GM12878 (cell line): ENCODE measurements at regions of chr19 and their contacts with region 1.

Region 1: GRCh38 chr19:42563352-42564210 is 31.1 kb downstream of the CEACAM8 start:
- DNase-seq: no peak
- ATAC-seq: peak; percentile 94
- H3K4me3 ChIP-seq: no peak overlapping the region
- H3K27ac ChIP-seq: no peak overlapping the region
- H3K4me1 ChIP-seq: no peaks in the 10 kb centered on the region
- H3K27me3 ChIP-seq: no peaks in the 10 kb centered on the region
- CTCF ChIP-seq: peak; percentile 67 to 78 (median 71)
- EP300 ChIP-seq: no peak
- POLR2A ChIP-seq: no peak
- RAD21 ChIP-seq: peak; percentile 58

Region 2: GRCh38 chr19:42497492-42498168 is 66.0 kb before region 1 on chr19:
- CTCF ChIA-PET with region 1: no interaction called
- POLR2A ChIA-PET with region 1: no interaction called
- RAD21 ChIA-PET with region 1: no interaction called
- SMC1A ChIA-PET with region 1: no interaction called
- in situ Hi-C with region 1: no loop called
- intact Hi-C with region 1: no loop called
- DNase-seq: peak; percentile 60
- ATAC-seq: peak; percentile 86
- H3K4me3 ChIP-seq: peak overlapping the region; percentile 9; the same call in 1 of the 2 replicates
- H3K27ac ChIP-seq: peak overlapping the region; percentile 80
- H3K4me1 ChIP-seq: peaks cover 28% of the 10 kb centered on the region
- H3K27me3 ChIP-seq: no peaks in the 10 kb centered on the region
- CTCF ChIP-seq: no peak
- EP300 ChIP-seq: peak; percentile 66 to 78; a peak in 3 of 4 replicates
- POLR2A ChIP-seq: no peak
- RAD21 ChIP-seq: 0 out of 2 replicates have a peak, but pooled peaks have one; percentile 8

Region 3: GRCh38 chr19:42596391-42597072 is 33.0 kb after region 1 on chr19:
- CTCF ChIA-PET with region 1: interaction called, 31 read pairs
- POLR2A ChIA-PET with region 1: no interaction called
- RAD21 ChIA-PET with region 1: no interaction called
- SMC1A ChIA-PET with region 1: interaction called, 4 read pairs
- in situ Hi-C with region 1: no loop called
- intact Hi-C with region 1: loop called (anchors 1 kb)
- DNase-seq: no peak
- ATAC-seq: peak; percentile 83
- H3K4me3 ChIP-seq: no peak overlapping the region
- H3K27ac ChIP-seq: no peak overlapping the region
- H3K4me1 ChIP-seq: no peaks in the 10 kb centered on the region
- H3K27me3 ChIP-seq: peaks cover 0 to 4% of the 10 kb centered on the region in 2 experiments; a peak in 1 of 4 replicates
- CTCF ChIP-seq: peak; percentile 80 to 96 (median 91)
- EP300 ChIP-seq: no peak
- POLR2A ChIP-seq: no peak
- RAD21 ChIP-seq: peak; percentile 57